A549 (cell line): ENCODE measurements at regions of chr20 and their contacts with region 1.

Region 1: GRCh38 chr20:23340524-23340923 is 10.1 kb upstream of the NXT1 start:
- DNase-seq: peak; percentile 83 to 87
- ATAC-seq: peak; percentile 85 to 95
- H3K4me3 ChIP-seq: no peak overlapping the region
- H3K27ac ChIP-seq: peak overlapping the region; percentile 6 to 60; a peak in 5 of 6 replicates
- H3K4me1 ChIP-seq: no peaks in the 10 kb centered on the region
- CTCF ChIP-seq: peak; percentile 90
- EP300 ChIP-seq: no peak
- POLR2A ChIP-seq: no peak
- RAD21 ChIP-seq: peak; percentile 92 to 96

Region 2: GRCh38 chr20:22700367-22700766 is 640.2 kb before region 1 on chr20:
- CTCF ChIA-PET with region 1: interaction called, 378 read pairs
- POLR2A ChIA-PET with region 1: no interaction called
- DNase-seq: no peak
- ATAC-seq: no peak; a peak in 1 of 6 replicates
- H3K4me3 ChIP-seq: no peak overlapping the region
- H3K27ac ChIP-seq: peak overlapping the region; percentile 17 to 54
- H3K4me1 ChIP-seq: peaks cover 14% of the 10 kb centered on the region; the same call in 2 of the 3 replicates
- CTCF ChIP-seq: no peak
- EP300 ChIP-seq: no peak
- POLR2A ChIP-seq: no peak
- RAD21 ChIP-seq: no peak

Region 3: DNA sequence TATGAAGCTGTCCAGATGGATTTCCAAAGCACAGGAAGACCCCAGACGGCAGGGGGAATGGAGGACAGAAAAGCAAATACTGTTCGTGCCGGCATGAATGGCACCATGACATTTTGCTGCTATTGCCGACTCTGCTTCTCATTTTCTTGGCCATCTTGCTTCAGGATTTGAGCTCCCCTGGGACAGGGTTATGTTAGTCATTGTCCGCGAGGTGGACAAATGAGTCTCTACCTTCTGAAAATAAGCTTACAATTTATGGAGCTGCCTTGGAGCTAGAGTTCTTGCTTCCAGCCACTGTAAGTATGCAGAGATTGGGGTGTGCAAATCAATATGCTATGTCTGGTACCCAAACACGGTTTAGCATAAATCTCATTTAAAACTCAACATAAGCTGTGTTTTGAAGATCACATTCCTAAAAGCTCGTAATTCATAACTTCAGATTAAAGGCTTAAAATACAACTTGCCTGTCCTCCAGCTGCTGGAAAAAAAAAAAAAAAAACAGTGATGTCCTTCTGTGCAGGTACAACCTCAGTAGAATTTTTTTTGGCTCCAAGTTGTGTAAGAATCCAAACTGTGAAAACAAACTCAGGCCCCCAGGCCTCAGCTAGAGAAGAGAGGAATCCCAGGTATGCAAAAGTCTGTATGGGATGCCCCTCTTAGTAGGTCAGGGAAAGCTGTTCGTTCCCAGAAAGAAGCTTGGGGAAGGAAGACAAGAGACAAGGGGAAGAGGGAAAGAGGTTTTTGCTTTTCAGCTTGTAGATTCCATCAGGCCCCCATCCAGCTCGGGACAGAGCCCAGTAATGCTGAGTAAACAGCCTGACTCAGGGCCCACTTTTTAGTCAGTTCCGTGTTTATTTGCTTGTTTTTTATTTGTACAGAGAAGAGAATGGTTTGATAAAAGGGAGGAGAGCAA is 572.0 kb before region 1 on chr20:
- CTCF ChIA-PET with region 1: interaction called, 10 read pairs
- POLR2A ChIA-PET with region 1: no interaction called
- DNase-seq: peak in 1 of 2 experiments; percentile 76
- ATAC-seq: peak; percentile 63 to 77; a peak in 5 of 6 replicates
- H3K4me3 ChIP-seq: no peak overlapping the region
- H3K27ac ChIP-seq: peak overlapping the region; percentile 92 to 98
- H3K4me1 ChIP-seq: peaks cover 61% of the 10 kb centered on the region
- CTCF ChIP-seq: no peak
- EP300 ChIP-seq: peak; percentile 30 to 61; a peak in 2 of 5 replicates
- POLR2A ChIP-seq: no peak
- RAD21 ChIP-seq: no peak; a peak in 1 of 5 replicates

Region 4: DNA sequence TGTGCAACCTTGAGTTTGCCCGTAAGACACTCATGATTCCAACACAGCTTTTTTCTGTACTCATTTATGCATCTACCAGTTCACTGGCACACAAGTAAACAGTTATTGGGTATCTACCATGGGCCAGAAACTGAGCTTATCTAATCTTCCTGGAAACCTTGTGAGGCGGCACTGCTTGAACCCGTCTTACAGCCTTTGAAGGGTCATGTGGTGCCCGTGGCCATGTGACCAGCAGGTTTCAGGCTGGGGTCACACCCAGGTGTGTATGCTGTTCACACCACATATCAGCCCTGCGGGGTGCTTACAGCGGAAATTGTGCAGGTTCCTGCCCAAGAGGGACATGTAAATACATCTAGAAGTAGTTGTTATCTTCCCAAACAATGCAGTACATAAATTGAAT is 297.1 kb before region 1 on chr20:
- CTCF ChIA-PET with region 1: interaction called, 156 read pairs
- POLR2A ChIA-PET with region 1: no interaction called
- DNase-seq: no peak
- ATAC-seq: no peak
- H3K4me3 ChIP-seq: no peak overlapping the region
- H3K27ac ChIP-seq: peak overlapping the region in 1 of 2 experiments; percentile 14; a peak in 1 of 6 replicates
- H3K4me1 ChIP-seq: peaks cover 48% of the 10 kb centered on the region
- CTCF ChIP-seq: no peak
- EP300 ChIP-seq: no peak
- POLR2A ChIP-seq: no peak
- RAD21 ChIP-seq: no peak

Region 5: DNA sequence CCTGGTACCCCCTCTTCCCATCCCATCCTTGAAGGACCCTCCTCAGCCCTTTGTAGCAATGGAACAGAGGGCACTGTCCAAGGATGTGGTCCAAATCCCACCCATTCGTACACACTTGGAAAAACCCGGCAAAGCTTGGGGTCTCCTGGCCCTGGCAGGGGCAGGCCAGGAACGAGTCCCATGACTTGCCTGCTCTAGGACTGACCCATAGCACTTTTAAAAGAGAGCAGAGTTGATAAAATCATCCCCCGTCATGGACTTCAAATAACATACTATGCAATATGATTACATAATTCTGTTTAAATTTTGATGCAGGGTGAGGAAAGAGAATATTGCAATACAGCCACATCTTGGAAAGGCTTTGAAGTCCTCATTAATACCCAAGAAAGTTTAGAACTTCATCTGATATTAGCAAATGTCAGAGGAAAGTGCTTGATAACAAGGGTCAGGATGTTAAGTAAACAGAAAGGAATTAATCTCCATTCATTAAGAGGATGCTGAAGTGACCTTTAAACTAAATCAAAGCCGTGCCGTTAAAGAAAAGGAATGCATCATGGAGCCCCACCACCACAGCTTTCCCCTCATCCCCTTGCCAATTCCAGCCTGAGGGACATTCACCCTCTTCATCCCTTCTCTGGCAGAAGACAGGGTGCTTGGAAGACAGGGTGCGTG is 50.7 kb before region 1 on chr20:
- CTCF ChIA-PET with region 1: interaction called, 11 read pairs
- POLR2A ChIA-PET with region 1: no interaction called
- DNase-seq: no peak
- ATAC-seq: no peak
- H3K4me3 ChIP-seq: no peak overlapping the region
- H3K27ac ChIP-seq: no peak overlapping the region
- H3K4me1 ChIP-seq: no peaks in the 10 kb centered on the region
- CTCF ChIP-seq: no peak
- EP300 ChIP-seq: no peak
- POLR2A ChIP-seq: no peak
- RAD21 ChIP-seq: no peak

Region 6: DNA sequence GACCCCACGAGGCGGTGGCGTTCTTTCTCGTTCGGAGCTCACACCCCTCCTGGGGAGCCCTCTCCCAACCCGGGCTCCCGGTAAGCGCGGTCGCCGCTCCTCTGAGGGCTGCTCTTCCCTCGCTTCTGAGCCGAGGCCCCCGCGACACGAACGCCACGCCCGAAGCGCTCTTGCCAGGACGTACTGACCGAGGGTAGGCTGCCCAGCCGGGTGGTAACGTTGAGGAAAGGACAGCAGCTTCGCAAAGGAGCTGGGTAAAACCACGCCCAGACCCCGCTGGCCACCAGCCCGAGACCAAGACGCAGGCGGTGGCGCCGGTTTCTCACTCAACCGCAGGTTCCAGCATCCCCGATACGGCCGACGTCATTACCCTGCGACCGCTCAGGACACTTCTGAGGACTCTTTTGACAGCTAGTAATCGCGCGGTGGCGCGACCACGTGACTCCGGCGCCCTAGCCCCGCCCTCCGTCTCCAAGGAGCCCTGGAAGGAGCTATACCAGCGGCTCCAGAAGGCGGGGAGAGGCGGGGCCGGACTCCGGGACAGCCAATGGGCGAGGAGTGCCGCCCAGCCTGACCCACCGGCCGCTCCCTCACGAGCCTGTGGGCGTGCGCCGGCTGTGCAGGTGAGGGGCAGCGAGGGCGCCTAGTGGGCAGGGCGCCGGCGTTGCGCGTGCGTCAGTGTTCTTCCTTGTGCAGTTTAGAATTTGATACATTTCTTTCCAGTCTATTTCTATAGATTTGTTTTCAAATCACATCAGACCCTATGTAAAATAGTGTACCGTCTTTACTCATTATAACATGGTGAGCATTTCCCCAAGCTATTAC is 17.5 kb after region 1 on chr20:
- CTCF ChIA-PET with region 1: interaction called, 10 read pairs
- POLR2A ChIA-PET with region 1: interaction called, 5 read pairs
- DNase-seq: peak; percentile 88 to 100
- ATAC-seq: peak; percentile 74 to 91
- H3K4me3 ChIP-seq: peak overlapping the region; percentile 68
- H3K27ac ChIP-seq: peak overlapping the region; percentile 91
- H3K4me1 ChIP-seq: peaks cover 21% of the 10 kb centered on the region
- CTCF ChIP-seq: no peak
- EP300 ChIP-seq: no peak
- POLR2A ChIP-seq: peak; percentile 72
- RAD21 ChIP-seq: no peak

Region 7: GRCh38 chr20:23399568-23400241 is 59.2 kb after region 1 on chr20:
- CTCF ChIA-PET with region 1: no interaction called
- POLR2A ChIA-PET with region 1: no interaction called
- DNase-seq: peak; percentile 24 to 28
- ATAC-seq: peak; percentile 66 to 80; a peak in 5 of 6 replicates
- H3K4me3 ChIP-seq: no peak overlapping the region
- H3K27ac ChIP-seq: no peak overlapping the region
- H3K4me1 ChIP-seq: no peaks in the 10 kb centered on the region
- CTCF ChIP-seq: no peak
- EP300 ChIP-seq: no peak
- POLR2A ChIP-seq: no peak
- RAD21 ChIP-seq: no peak